ENCODE measurements at regions of chr16 and their contacts with region 1.

Region 1: GRCh38 chr16:2838928-2839327 is 8.8 kb downstream of the ZG16B start:
- DNase-seq: peak; percentile 86
- ATAC-seq: peak; percentile 94
- H3K4me3 Mint-ChIP-seq: peak overlapping the region; percentile 29; the same call in 1 of the 2 replicates
- H3K27ac Mint-ChIP-seq: no peak overlapping the region
- H3K4me1 Mint-ChIP-seq: peaks cover 14% of the 10 kb centered on the region
- H3K27me3 Mint-ChIP-seq: peaks cover 14% of the 10 kb centered on the region
- CTCF ChIP-seq: peak; percentile 85

Region 2: GRCh38 chr16:2827374-2827791 is 11.5 kb before region 1 on chr16:
- CTCF ChIA-PET with region 1: interaction called, 13 read pairs
- POLR2A ChIA-PET with region 1: no interaction called
- DNase-seq: no peak
- ATAC-seq: no peak
- H3K4me3 Mint-ChIP-seq: no peak overlapping the region
- H3K27ac Mint-ChIP-seq: no peak overlapping the region
- H3K4me1 Mint-ChIP-seq: no peaks in the 10 kb centered on the region
- H3K27me3 Mint-ChIP-seq: no peaks in the 10 kb centered on the region
- CTCF ChIP-seq: no peak

Region 3: GRCh38 chr16:2867987-2868789 is 29.3 kb after region 1 on chr16:
- CTCF ChIA-PET with region 1: interaction called, 99 read pairs
- POLR2A ChIA-PET with region 1: interaction called, 7 read pairs
- DNase-seq: peak; percentile 97
- ATAC-seq: peak; percentile 94
- H3K4me3 Mint-ChIP-seq: peak overlapping the region; percentile 73
- H3K27ac Mint-ChIP-seq: no peak overlapping the region
- H3K4me1 Mint-ChIP-seq: 0 out of 2 replicates have a peak, but pooled peaks cover 3% of the 10 kb centered on the region
- H3K27me3 Mint-ChIP-seq: peaks cover 80% of the 10 kb centered on the region
- CTCF ChIP-seq: peak; percentile 95

Region 4: GRCh38 chr16:2905431-2906387 is 66.8 kb after region 1 on chr16:
- CTCF ChIA-PET with region 1: interaction called, 31 read pairs
- POLR2A ChIA-PET with region 1: interaction called, 3 read pairs
- DNase-seq: peak; percentile 100
- ATAC-seq: peak; percentile 82
- H3K4me3 Mint-ChIP-seq: peak overlapping the region; percentile 97
- H3K27ac Mint-ChIP-seq: peak overlapping the region; percentile 91
- H3K4me1 Mint-ChIP-seq: peaks cover 17% of the 10 kb centered on the region
- H3K27me3 Mint-ChIP-seq: peaks cover 18% of the 10 kb centered on the region
- CTCF ChIP-seq: no peak

Region 5: DNA sequence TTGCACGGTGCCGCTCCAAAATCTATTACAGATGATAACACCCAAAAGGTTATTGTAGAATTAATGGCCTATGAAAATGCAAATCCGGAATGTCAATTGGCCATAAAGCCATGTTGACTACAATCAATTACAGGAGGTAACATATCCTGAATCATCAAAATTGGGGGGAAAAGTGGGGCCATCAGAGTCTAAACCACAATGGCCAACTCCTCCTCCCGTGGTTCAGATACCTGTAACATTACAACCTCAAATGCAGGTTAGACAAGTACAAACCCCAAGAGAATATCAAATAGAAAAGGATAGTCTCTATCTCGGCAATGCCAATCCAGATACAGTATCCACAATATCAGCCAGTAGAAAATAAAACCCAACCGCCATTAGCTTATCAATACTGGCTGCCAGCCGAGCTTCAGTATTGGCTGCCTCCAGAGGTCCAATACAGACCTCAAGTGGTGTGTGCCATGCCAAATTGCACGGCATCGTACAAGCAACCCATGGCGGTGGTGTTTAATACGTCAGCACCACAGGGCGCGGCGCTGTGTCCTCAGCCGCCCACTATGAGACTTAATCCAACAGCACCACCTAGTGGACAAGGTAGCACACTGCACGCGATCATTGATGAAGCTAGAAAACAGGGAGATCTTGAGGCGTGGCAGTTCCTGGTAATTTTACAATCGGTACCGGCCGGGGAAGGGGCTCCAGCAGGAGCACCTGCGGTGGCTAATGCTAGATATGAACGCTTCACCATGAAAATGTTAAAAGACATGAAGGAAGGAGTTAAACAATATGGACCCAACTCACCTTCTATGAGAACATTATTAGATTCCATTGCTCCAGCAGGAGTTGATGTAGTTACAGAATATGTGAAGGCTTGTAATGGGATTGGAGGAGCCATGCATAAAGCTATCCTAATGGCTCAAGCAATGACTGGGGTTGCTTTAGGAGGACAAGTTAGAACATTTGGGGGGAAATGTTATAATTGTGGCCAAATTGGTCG is 88.0 kb after region 1 on chr16:
- CTCF ChIA-PET with region 1: interaction called, 31 read pairs
- POLR2A ChIA-PET with region 1: no interaction called
- DNase-seq: peak; percentile 92
- ATAC-seq: peak; percentile 70
- H3K4me3 Mint-ChIP-seq: no peak overlapping the region; the same call in 1 of the 2 replicates
- H3K27ac Mint-ChIP-seq: peak overlapping the region; percentile 11; the same call in 1 of the 2 replicates
- H3K4me1 Mint-ChIP-seq: peaks cover 33% of the 10 kb centered on the region
- H3K27me3 Mint-ChIP-seq: peaks cover 9% of the 10 kb centered on the region
- CTCF ChIP-seq: peak; percentile 98